Activated CD8-positive, alpha-beta memory T cell treated with anti-CD3 and anti-CD28 coated beads, Interleukin-2, amount 10 ng/mL, durations not matched to agents 7 days and 5 days (primary cell): ENCODE measurements at regions of chr7 and their contacts with region 1.

Region 1: DNA sequence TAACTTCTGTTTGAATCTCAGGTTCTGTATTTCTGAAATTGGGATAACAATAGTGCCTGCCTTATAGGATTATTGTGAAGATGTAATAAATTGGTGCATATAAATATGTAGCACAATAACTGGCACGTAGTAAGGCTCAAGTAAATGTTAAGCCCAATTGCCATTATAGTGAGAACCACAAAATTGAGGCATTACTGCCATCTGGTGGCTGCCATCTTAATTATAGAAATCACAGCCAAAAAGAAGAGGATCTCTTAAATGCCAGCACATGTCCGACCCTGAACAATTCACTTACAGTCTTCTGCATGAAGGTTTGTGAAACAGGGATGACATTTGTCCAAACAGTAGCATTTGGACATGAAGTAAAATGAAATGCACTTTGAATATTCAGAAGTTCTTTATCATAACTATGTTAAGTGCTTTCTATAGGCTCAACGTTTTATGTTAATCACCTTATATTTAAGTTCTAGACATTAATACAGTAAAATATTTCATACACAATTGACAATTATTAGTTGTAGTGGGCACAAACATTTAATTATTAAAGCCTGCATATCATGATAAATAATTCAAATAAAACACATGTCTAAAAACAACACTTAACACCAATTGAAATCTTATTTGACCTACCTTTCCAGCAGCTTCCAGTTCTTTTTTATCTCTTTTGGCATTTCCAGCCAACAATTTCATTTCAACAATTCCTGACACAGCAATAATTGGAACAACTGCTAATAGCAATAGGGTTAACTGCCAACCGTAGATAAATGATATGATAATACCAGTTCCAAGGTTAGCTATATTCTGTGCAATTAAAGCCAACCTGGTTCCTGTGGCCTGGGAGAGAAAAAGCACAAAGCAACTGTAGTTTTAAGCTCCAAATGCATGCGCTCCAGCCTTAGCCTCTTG is 58.5 kb downstream of the ABCB4 start:
- DNase-seq: peak; percentile 74
- ATAC-seq: peak; percentile 76
- H3K4me3 Mint-ChIP-seq: no peak overlapping the region
- H3K27ac Mint-ChIP-seq: no peak overlapping the region
- H3K4me1 Mint-ChIP-seq: no peaks in the 10 kb centered on the region
- H3K27me3 Mint-ChIP-seq: peaks cover 3% of the 10 kb centered on the region

Region 2: GRCh38 chr7:86914551-86914950 is 502.4 kb before region 1 on chr7:
- CTCF ChIA-PET with region 1: no interaction called
- DNase-seq: no peak
- ATAC-seq: no peak
- H3K4me3 Mint-ChIP-seq: no peak overlapping the region
- H3K27ac Mint-ChIP-seq: no peak overlapping the region
- H3K4me1 Mint-ChIP-seq: peaks cover 8% of the 10 kb centered on the region
- H3K27me3 Mint-ChIP-seq: no peaks in the 10 kb centered on the region

Region 3: GRCh38 chr7:87312215-87312865 is 104.6 kb before region 1 on chr7:
- CTCF ChIA-PET with region 1: interaction called, 78 read pairs
- DNase-seq: peak; percentile 69
- ATAC-seq: peak; percentile 83
- H3K4me3 Mint-ChIP-seq: no peak overlapping the region
- H3K27ac Mint-ChIP-seq: no peak overlapping the region
- H3K4me1 Mint-ChIP-seq: no peaks in the 10 kb centered on the region
- H3K27me3 Mint-ChIP-seq: peaks cover 3% of the 10 kb centered on the region

Region 4: DNA sequence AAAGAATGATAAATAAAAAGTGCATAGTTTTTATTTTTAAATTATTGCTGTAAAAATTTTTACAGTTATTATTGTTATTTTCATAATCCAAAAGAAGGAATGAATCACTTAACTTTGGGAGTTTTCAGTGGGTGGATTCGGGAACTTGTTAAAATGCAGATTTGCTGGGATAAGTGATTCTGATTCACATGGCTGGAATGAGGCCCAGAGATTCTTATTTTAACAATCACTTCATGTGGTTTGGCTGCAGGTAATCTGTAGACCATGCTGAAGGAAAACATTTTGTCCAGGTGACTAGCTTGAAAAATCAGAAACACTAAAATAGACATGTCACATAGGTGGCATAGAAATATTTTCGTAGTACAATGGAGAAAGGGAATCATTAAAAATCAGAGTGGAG is 57.6 kb before region 1 on chr7:
- CTCF ChIA-PET with region 1: no interaction called
- DNase-seq: no peak
- ATAC-seq: no peak
- H3K4me3 Mint-ChIP-seq: no peak overlapping the region
- H3K27ac Mint-ChIP-seq: no peak overlapping the region
- H3K4me1 Mint-ChIP-seq: no peaks in the 10 kb centered on the region
- H3K27me3 Mint-ChIP-seq: no peaks in the 10 kb centered on the region

Region 5: DNA sequence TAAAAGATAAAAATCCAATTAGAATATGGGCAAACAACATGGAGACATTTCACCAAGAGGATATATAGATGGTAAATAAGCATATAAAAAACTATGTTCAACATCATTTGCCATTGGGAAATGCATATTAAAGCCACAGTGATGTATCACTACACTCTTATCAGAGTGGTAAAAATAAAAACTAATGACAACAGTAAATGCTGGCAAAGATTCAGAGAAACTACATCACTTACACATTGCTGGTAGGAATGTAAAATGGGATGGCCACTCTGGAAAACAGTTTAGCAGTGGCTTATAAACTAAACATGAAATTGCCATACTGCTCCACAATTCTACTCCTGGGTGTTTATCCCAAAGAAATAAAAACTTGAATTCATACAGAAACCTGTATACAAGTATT is 12.3 kb before region 1 on chr7:
- CTCF ChIA-PET with region 1: interaction called, 13 read pairs
- DNase-seq: no peak
- ATAC-seq: no peak
- H3K4me3 Mint-ChIP-seq: no peak overlapping the region
- H3K27ac Mint-ChIP-seq: no peak overlapping the region
- H3K4me1 Mint-ChIP-seq: no peaks in the 10 kb centered on the region
- H3K27me3 Mint-ChIP-seq: no peaks in the 10 kb centered on the region

Region 6: DNA sequence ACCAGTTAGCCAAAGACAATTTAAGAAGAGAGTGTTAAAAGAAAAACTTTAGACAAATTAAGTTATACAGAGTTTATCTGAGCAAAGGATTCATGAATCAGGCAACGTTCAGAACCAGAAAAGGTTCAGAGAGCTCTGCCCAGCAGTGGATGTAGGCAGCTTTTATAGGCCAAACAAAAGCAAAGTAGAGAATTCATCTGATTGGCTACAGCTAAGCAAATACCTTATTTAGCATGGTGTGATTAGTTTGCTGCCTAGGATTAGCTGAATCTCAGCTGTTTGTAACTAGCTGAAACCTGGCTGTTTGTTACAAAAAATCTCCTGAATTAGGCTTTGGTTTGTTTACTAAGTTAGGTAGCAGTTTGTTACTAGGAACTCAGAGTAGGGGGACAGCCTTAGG is 393.2 kb after region 1 on chr7:
- CTCF ChIA-PET with region 1: no interaction called
- DNase-seq: no peak
- ATAC-seq: no peak
- H3K4me3 Mint-ChIP-seq: no peak overlapping the region
- H3K27ac Mint-ChIP-seq: no peak overlapping the region
- H3K4me1 Mint-ChIP-seq: no peaks in the 10 kb centered on the region
- H3K27me3 Mint-ChIP-seq: no peaks in the 10 kb centered on the region